ENCODE measurements at regions of chr22 and their contacts with region 1.

Region 1: GRCh38 chr22:38569972-38570778 is at the start of gene DMC1:
- DNase-seq: peak; percentile 91
- ATAC-seq: peak; percentile 98
- total RNA-seq, gene DMC1: 0.46 TPM

Region 2: GRCh38 chr22:38051900-38052862 is 518.0 kb before region 1 on chr22:
- intact Hi-C with region 1: loop called (anchors 1 kb)
- DNase-seq: peak; percentile 89
- ATAC-seq: peak; percentile 70

Measured in Right ventricle myocardium inferior (tissue), 1 donor.